Naive thymus-derived CD4-positive, alpha-beta T cell (primary cell): ENCODE measurements at regions of chr5 and their contacts with region 1.

Region 1: GRCh38 chr5:40594811-40595210 is 84.9 kb upstream of the PTGER4 start:
- DNase-seq: no peak
- ATAC-seq: no peak
- H3K4me3 ChIP-seq: no peak overlapping the region
- H3K4me3 Mint-ChIP-seq: no peak overlapping the region
- H3K27ac ChIP-seq: no peak overlapping the region
- H3K27ac Mint-ChIP-seq: no peak overlapping the region
- H3K4me1 ChIP-seq: peaks cover 0 to 5% of the 10 kb centered on the region in 2 donors
- H3K4me1 Mint-ChIP-seq: peaks cover 10 to 29% (median 16%) of the 10 kb centered on the region in 7 donors
- H3K27me3 ChIP-seq: no peaks in the 10 kb centered on the region
- H3K27me3 Mint-ChIP-seq: no peaks in the 10 kb centered on the region

Region 2: GRCh38 chr5:40578501-40579451 is 16.0 kb before region 1 on chr5:
- CTCF ChIA-PET with region 1: no interaction called
- POLR2A ChIA-PET with region 1: interaction called, 3 read pairs
- intact Hi-C with region 1: loop called in 1 of 2 experiments (anchors 2 kb)
- DNase-seq: peak in 4 of 9 donors; percentile 7 to 45 (median 8)
- ATAC-seq: peak; percentile 45
- H3K4me3 ChIP-seq: no peak overlapping the region
- H3K4me3 Mint-ChIP-seq: peak overlapping the region in 9 of 10 donors; percentile 61 to 83 (median 79)
- H3K27ac ChIP-seq: peak overlapping the region; percentile 11
- H3K27ac Mint-ChIP-seq: peak overlapping the region; percentile 6 to 85 (median 73)
- H3K4me1 ChIP-seq: no peaks in the 10 kb centered on the region
- H3K4me1 Mint-ChIP-seq: peaks cover 14 to 35% (median 24%) of the 10 kb centered on the region in 7 donors
- H3K27me3 ChIP-seq: no peaks in the 10 kb centered on the region
- H3K27me3 Mint-ChIP-seq: no peaks in the 10 kb centered on the region

Region 3: DNA sequence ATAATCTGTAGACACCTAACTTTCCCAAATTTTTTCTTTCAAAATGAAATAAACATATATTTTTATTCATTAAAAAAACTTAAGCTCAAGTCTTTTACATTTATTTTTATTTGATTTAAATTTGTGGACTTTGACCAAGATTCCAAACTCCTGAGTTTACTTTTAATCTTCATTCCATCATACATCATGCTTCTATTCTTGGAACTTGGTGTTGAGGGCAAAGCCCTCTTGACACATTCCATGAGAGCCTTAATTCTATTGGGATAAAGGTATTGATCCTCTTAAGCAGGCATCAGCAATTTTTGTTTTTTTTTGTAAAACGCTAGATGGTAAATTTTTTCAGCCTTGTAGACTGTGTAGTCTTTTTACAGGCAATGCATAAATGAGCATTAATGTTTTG is 1383.9 kb after region 1 on chr5:
- CTCF ChIA-PET with region 1: no interaction called
- POLR2A ChIA-PET with region 1: no interaction called
- intact Hi-C with region 1: no loop called
- DNase-seq: no peak
- ATAC-seq: no peak
- H3K4me3 ChIP-seq: no peak overlapping the region
- H3K4me3 Mint-ChIP-seq: no peak overlapping the region
- H3K27ac ChIP-seq: no peak overlapping the region
- H3K27ac Mint-ChIP-seq: no peak overlapping the region
- H3K4me1 ChIP-seq: no peaks in the 10 kb centered on the region
- H3K4me1 Mint-ChIP-seq: peaks cover 0 to 2% (median 0%) of the 10 kb centered on the region in 7 donors
- H3K27me3 ChIP-seq: no peaks in the 10 kb centered on the region
- H3K27me3 Mint-ChIP-seq: peaks cover 0 to 8% (median 4%) of the 10 kb centered on the region in 5 donors